ENCODE measurements at regions of chr18 and their contacts with region 1.

Region 1: GRCh38 chr18:78156466-78156865 is 823.2 kb upstream of the SALL3 start:
- DNase-seq: no peak
- H3K4me3 ChIP-seq: no peak overlapping the region
- H3K27ac ChIP-seq: no peak overlapping the region
- H3K4me1 ChIP-seq: no peaks in the 10 kb centered on the region
- H3K27me3 ChIP-seq: no peaks in the 10 kb centered on the region
- CTCF ChIP-seq: no peak
- POLR2A ChIP-seq: no peak

Region 2: DNA sequence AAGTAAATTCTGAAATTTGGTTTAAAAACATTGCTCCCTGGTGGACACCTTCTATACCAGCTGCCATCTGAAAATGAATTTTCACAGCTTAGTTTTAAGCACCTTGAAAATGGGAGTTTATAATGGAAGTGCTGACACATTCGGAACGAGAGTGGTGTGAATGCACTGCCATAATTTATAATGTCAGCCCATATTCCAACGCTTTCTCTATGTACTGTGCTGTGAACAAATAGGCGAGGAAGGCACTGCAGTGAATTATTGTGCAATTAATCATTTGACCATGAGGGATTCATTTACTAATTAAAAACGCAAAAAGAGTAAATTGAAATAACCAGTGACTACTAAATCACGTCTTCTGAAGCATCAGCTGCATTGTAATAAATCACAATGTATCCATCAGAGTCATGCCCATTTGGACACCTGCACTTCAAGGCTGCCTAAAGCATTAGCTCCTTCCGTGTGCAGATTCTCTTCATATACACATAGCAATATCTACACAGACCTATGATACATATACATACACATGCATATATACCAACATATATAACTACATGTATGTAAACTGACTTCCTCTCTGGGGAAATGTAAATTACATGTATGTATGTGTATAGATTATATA is 207.0 kb before region 1 on chr18:
- intact Hi-C with region 1: loop called (anchors 5 kb)
- DNase-seq: no peak
- H3K4me3 ChIP-seq: no peak overlapping the region
- H3K27ac ChIP-seq: no peak overlapping the region
- H3K4me1 ChIP-seq: no peaks in the 10 kb centered on the region
- H3K27me3 ChIP-seq: no peaks in the 10 kb centered on the region
- CTCF ChIP-seq: no peak
- POLR2A ChIP-seq: no peak

Region 3: GRCh38 chr18:78144669-78145068 is 11.8 kb before region 1 on chr18:
- intact Hi-C with region 1: no loop called
- DNase-seq: no peak
- H3K4me3 ChIP-seq: no peak overlapping the region
- H3K27ac ChIP-seq: no peak overlapping the region
- H3K4me1 ChIP-seq: no peaks in the 10 kb centered on the region
- H3K27me3 ChIP-seq: peaks cover 0 to 6% of the 10 kb centered on the region in 2 donors
- CTCF ChIP-seq: no peak
- POLR2A ChIP-seq: no peak

Region 4: GRCh38 chr18:78221496-78221895 is 65.0 kb after region 1 on chr18:
- intact Hi-C with region 1: loop called (anchors 1 kb)
- DNase-seq: no peak
- H3K4me3 ChIP-seq: no peak overlapping the region
- H3K27ac ChIP-seq: no peak overlapping the region
- H3K4me1 ChIP-seq: no peaks in the 10 kb centered on the region
- H3K27me3 ChIP-seq: peaks cover 0 to 9% of the 10 kb centered on the region in 2 donors
- CTCF ChIP-seq: no peak
- POLR2A ChIP-seq: no peak

Measured in breast epithelium (tissue), 4 donors.